Sigmoid colon (tissue), 7 donors: ENCODE measurements at regions of chr17 and their contacts with region 1.

Region 1: DNA sequence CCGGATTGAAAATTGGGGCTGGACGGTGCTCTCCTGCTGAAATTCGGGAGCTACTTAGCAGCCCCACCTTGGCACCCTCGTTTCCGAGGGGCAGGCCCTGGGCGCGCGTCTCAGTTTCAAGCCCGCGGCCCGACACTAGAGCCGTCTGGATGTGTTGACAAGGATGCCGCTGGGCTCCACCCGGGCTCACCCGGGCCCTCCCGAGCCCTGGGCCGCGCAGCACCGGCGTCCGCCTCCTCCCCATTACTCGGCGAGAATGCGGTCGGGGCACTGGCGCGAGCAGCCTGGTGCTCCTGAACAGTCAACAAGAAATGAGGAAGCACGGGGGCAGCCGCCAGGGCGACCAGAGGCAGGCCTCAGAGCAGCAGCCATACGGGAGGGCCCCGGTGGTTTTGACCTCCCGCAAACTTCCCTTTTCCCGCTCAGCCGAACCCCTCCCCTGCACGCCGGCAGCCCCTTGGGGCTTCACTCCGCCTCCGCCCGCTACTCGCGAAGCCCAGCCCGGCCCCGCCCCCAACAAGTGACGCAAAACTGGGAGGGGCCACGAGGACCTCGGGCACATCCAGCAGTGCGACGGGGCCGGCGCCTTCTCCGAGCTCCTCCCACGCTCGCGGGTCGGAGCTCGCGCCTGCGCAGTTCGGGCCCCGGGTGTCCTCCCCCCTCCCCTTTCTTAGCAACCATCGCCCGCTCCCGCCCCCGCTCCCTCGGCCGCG is 447 bp upstream of the SEC14L1 start:
- DNase-seq: peak; percentile 100
- H3K4me3 ChIP-seq: peak overlapping the region; percentile 47 to 100 (median 98)
- H3K27ac ChIP-seq: peak overlapping the region; percentile 94 to 98 (median 96)
- H3K4me1 ChIP-seq: peaks cover 0 to 21% (median 17%) of the 10 kb centered on the region in 4 donors
- H3K27me3 ChIP-seq: no peaks in the 10 kb centered on the region
- CTCF ChIP-seq: no peak
- EP300 ChIP-seq: peak in 1 of 4 donors; percentile 35
- POLR2A ChIP-seq: peak; percentile 96 to 98

Region 2: GRCh38 chr17:76737082-76737675 is 403.1 kb before region 1 on chr17 and contains the start of gene SRSF2:
- intact Hi-C with region 1: loop called (anchors 5 kb)
- DNase-seq: peak; percentile 99
- H3K4me3 ChIP-seq: peak within 1 kb of the TSS; percentile 91 to 97 (median 94)
- H3K27ac ChIP-seq: peak within 1 kb of the TSS; percentile 98 to 99 (median 98)
- H3K4me1 ChIP-seq: peaks cover 0 to 73% (median 65%) of the 10 kb centered on the region in 4 donors
- H3K27me3 ChIP-seq: no peaks in the 10 kb centered on the region
- CTCF ChIP-seq: no peak
- EP300 ChIP-seq: peak in 1 of 4 donors; percentile 67
- POLR2A ChIP-seq: peak; percentile 99 to 100
- total RNA-seq, gene SRSF2: 123 to 229 (median 129) TPM

Region 3: DNA sequence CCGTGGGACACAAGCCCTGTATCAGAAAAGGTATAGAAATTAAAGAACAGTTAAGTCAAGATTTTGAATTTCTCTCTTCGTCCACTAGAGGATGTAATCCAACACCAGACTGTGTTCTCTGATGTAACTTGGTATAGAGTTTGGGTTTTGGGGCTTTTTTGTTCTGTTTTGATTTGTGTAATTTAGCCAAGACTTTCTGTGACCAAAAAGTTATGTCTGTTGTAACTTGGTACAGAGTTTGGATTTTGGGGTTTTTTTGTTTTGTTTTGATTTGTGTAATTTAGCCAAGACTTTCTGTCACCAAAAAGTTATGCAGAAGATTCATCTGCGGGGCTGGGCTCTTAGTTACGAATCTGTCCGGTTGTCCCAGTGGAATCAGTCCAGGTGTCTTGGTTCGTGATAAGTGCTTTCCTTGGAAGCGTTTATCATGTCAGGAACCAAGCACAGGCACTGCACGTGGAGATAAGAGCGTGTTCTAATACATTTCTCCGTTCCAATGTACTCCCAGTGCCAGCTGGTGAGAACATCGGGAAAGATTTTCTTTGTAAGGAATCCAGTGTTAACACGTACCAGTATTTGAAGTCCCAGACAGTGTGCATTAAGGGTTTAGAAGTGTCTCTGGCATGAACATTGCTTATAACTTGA is 43.6 kb before region 1 on chr17:
- intact Hi-C with region 1: loop called (anchors 2 kb)
- DNase-seq: no peak
- H3K4me3 ChIP-seq: peak overlapping the region in 1 of 4 donors; percentile 4
- H3K27ac ChIP-seq: peak overlapping the region; percentile 76 to 80 (median 78)
- H3K4me1 ChIP-seq: peaks cover 0 to 41% (median 37%) of the 10 kb centered on the region in 4 donors
- H3K27me3 ChIP-seq: no peaks in the 10 kb centered on the region
- CTCF ChIP-seq: peak; percentile 67 to 95 (median 78)
- EP300 ChIP-seq: no peak
- POLR2A ChIP-seq: no peak